Cardiac septum (tissue), 1 donor: ENCODE measurements at regions of chr1 and their contacts with region 1.

Region 1: GRCh38 chr1:165928075-165928731 is 100.8 kb downstream of the UCK2 start:
- DNase-seq: no peak

Region 2: GRCh38 chr1:166432655-166433054 is 504.5 kb after region 1 on chr1:
- intact Hi-C with region 1: loop called (anchors 2 kb)
- DNase-seq: no peak

Region 3: DNA sequence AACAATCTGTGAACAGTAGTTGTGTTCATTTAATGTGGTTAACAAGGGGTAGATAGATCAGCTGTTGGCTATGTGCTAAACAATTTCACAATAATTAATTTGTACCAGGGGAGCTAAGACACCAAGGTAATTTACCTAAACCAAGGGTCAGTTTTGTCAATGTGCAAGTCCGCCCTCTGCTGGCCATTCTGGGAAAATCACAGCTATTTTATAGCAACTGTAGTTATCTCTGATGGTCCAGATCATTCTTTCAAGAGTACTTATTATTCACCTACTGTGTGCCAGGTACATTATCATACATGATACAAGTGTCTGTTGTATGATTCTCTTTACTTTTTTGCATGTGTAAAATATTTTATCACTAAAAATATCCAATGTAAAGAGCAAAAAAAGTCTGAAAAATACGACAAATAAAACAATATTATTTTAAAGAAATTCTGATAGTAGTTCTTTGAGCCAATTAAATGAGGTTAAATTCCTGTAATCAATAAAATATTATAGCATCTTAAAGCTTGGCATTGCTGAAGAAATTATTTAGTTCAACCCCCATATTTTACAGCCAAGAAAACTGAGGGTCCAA is 550.9 kb after region 1 on chr1:
- intact Hi-C with region 1: loop called (anchors 2 kb)
- DNase-seq: no peak